CD8-positive, alpha-beta T cell (primary cell): ENCODE measurements at regions of chr20 and their contacts with region 1.

Region 1: DNA sequence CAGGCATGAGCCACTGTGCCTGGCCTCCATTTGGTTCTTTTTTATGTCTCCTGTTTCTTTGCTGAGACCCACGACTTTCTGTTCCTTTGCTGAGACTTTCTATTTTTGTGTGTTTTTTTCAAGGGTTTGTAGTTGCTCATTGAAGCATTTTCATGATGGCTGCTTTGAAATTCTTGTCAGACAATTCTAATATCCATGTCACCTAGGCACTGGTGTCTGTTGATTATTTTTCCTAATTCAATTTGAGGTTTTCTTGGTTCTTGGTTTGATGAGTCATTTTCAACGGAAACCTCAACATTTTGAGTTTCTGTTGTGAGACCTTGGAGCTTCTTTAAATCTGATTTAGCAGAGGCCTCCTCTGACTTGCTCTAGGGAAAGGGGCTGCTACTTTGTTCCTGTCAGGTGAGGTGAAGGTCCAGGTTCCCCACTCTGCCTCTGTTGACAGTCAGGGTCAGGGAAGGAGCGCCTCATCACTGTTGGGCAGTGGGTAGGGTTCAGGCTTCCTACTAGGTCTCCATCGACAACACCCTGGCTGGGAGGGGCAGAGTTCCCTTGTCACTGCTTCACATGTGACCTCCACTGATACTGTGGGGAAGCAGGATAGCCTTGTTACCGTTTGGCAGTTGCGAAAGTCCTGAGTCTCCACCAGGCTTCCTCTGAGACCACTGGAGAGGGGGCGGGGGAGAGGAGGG is 67.2 kb upstream of the RNF24 start:
- DNase-seq: peak; percentile 16 to 77 (median 47)
- ATAC-seq: peak; percentile 70
- H3K4me3 ChIP-seq: peak overlapping the region in 1 of 2 experiments; percentile 26
- H3K4me3 Mint-ChIP-seq: peak overlapping the region; percentile 32
- H3K27ac ChIP-seq: peak overlapping the region in 1 of 2 experiments; percentile 75
- H3K27ac Mint-ChIP-seq: peak overlapping the region; percentile 82
- H3K4me1 ChIP-seq: peaks cover 12% of the 10 kb centered on the region
- H3K4me1 Mint-ChIP-seq: peaks cover 39% of the 10 kb centered on the region
- H3K27me3 ChIP-seq: no peaks in the 10 kb centered on the region
- H3K27me3 Mint-ChIP-seq: no peaks in the 10 kb centered on the region
- CTCF ChIP-seq: no peak

Region 2: GRCh38 chr20:3563548-3564177 is 518.9 kb before region 1 on chr20:
- CTCF ChIA-PET with region 1: no interaction called
- POLR2A ChIA-PET with region 1: no interaction called
- intact Hi-C with region 1: loop called in 1 of 2 experiments (anchors 2 kb)
- DNase-seq: peak in 2 of 9 experiments; percentile 39 to 54
- ATAC-seq: no peak
- H3K4me3 ChIP-seq: no peak overlapping the region
- H3K4me3 Mint-ChIP-seq: no peak overlapping the region
- H3K27ac ChIP-seq: no peak overlapping the region
- H3K27ac Mint-ChIP-seq: no peak overlapping the region
- H3K4me1 ChIP-seq: no peaks in the 10 kb centered on the region
- H3K4me1 Mint-ChIP-seq: no peaks in the 10 kb centered on the region
- H3K27me3 ChIP-seq: no peaks in the 10 kb centered on the region
- H3K27me3 Mint-ChIP-seq: no peaks in the 10 kb centered on the region
- CTCF ChIP-seq: peak; percentile 56

Region 3: GRCh38 chr20:3716195-3716834 is 366.2 kb before region 1 on chr20:
- CTCF ChIA-PET with region 1: interaction called, 3 read pairs
- POLR2A ChIA-PET with region 1: no interaction called
- intact Hi-C with region 1: loop called in 1 of 2 experiments (anchors 2 kb)
- DNase-seq: peak in 4 of 9 experiments; percentile 15 to 50 (median 27)
- ATAC-seq: peak; percentile 36
- H3K4me3 ChIP-seq: no peak overlapping the region
- H3K4me3 Mint-ChIP-seq: no peak overlapping the region
- H3K27ac ChIP-seq: no peak overlapping the region
- H3K27ac Mint-ChIP-seq: no peak overlapping the region
- H3K4me1 ChIP-seq: no peaks in the 10 kb centered on the region
- H3K4me1 Mint-ChIP-seq: no peaks in the 10 kb centered on the region
- H3K27me3 ChIP-seq: peaks cover 0 to 5% of the 10 kb centered on the region in 2 experiments
- H3K27me3 Mint-ChIP-seq: peaks cover 13% of the 10 kb centered on the region
- CTCF ChIP-seq: peak; percentile 22

Region 4: DNA sequence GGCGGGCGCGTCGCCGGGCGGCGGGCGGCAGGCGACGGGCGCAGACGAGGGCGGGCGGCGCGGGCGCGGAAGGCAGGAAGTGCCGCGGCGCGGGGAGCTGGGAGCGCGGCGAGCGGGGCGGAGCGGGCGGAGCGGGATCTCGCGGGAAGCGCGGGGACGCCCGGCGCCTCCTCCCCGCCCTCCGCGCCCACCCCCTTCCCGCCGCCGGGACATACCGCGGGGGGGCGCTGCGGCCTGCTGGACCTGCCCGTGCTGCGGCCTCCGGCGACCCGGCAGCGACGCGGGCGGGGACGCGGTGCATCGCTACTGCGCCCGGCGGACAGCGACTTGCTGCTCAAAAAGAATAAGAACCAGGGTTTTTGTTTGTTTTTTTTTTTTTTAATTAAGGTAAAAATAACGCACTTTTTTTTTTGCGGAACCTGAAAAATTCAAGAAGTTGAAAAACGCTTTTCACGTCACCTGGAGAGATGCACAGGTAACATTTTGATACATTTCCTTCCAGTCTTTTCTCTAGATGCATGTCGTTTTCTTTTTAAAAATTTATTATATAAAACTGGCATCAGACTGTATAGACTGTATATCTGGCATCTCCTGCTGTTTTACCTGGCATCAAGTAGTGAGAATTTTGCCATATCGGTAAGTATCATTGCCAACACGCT is 295.8 kb before region 1 on chr20 and contains the start of gene CENPB:
- CTCF ChIA-PET with region 1: no interaction called
- POLR2A ChIA-PET with region 1: no interaction called
- intact Hi-C with region 1: loop called in 1 of 2 experiments (anchors 10 kb)
- DNase-seq: peak; percentile 83 to 95 (median 90)
- ATAC-seq: peak; percentile 87
- H3K4me3 ChIP-seq: peak within 1 kb of the TSS; percentile 46 to 55
- H3K4me3 Mint-ChIP-seq: peak within 1 kb of the TSS; percentile 84
- H3K27ac ChIP-seq: peak within 1 kb of the TSS; percentile 37 to 75
- H3K27ac Mint-ChIP-seq: peak within 1 kb of the TSS; percentile 91
- H3K4me1 ChIP-seq: peaks cover 24% of the 10 kb centered on the region
- H3K4me1 Mint-ChIP-seq: peaks cover 30% of the 10 kb centered on the region
- H3K27me3 ChIP-seq: no peaks in the 10 kb centered on the region
- H3K27me3 Mint-ChIP-seq: no peaks in the 10 kb centered on the region
- CTCF ChIP-seq: peak; percentile 86
- total RNA-seq, gene CENPB: 23.2 to 24.1 TPM

Region 5: GRCh38 chr20:4027590-4028265 is 54.8 kb before region 1 on chr20:
- CTCF ChIA-PET with region 1: no interaction called
- POLR2A ChIA-PET with region 1: no interaction called
- intact Hi-C with region 1: no loop called
- DNase-seq: peak in 1 of 9 experiments; percentile 21
- ATAC-seq: no peak
- H3K4me3 ChIP-seq: no peak overlapping the region
- H3K4me3 Mint-ChIP-seq: no peak overlapping the region
- H3K27ac ChIP-seq: no peak overlapping the region
- H3K27ac Mint-ChIP-seq: no peak overlapping the region
- H3K4me1 ChIP-seq: no peaks in the 10 kb centered on the region
- H3K4me1 Mint-ChIP-seq: no peaks in the 10 kb centered on the region
- H3K27me3 ChIP-seq: no peaks in the 10 kb centered on the region
- H3K27me3 Mint-ChIP-seq: peaks cover 5% of the 10 kb centered on the region
- CTCF ChIP-seq: no peak

Region 6: GRCh38 chr20:4038047-4038459 is 44.5 kb before region 1 on chr20:
- CTCF ChIA-PET with region 1: interaction called, 12 read pairs
- POLR2A ChIA-PET with region 1: interaction called, 4 read pairs
- intact Hi-C with region 1: loop called (anchors 2 kb)
- DNase-seq: peak; percentile 62 to 94 (median 80)
- ATAC-seq: peak; percentile 100
- H3K4me3 ChIP-seq: peak overlapping the region; percentile 11 to 23
- H3K4me3 Mint-ChIP-seq: peak overlapping the region; percentile 80
- H3K27ac ChIP-seq: peak overlapping the region; percentile 45 to 66
- H3K27ac Mint-ChIP-seq: peak overlapping the region; percentile 97
- H3K4me1 ChIP-seq: peaks cover 20% of the 10 kb centered on the region
- H3K4me1 Mint-ChIP-seq: peaks cover 16% of the 10 kb centered on the region
- H3K27me3 ChIP-seq: no peaks in the 10 kb centered on the region
- H3K27me3 Mint-ChIP-seq: no peaks in the 10 kb centered on the region
- CTCF ChIP-seq: no peak

Region 7: GRCh38 chr20:4102381-4102780 is 19.8 kb after region 1 on chr20:
- CTCF ChIA-PET with region 1: interaction called, 10 read pairs
- POLR2A ChIA-PET with region 1: no interaction called
- intact Hi-C with region 1: no loop called
- DNase-seq: no peak
- ATAC-seq: no peak
- H3K4me3 ChIP-seq: no peak overlapping the region
- H3K4me3 Mint-ChIP-seq: no peak overlapping the region
- H3K27ac ChIP-seq: no peak overlapping the region
- H3K27ac Mint-ChIP-seq: no peak overlapping the region
- H3K4me1 ChIP-seq: no peaks in the 10 kb centered on the region
- H3K4me1 Mint-ChIP-seq: no peaks in the 10 kb centered on the region
- H3K27me3 ChIP-seq: no peaks in the 10 kb centered on the region
- H3K27me3 Mint-ChIP-seq: peaks cover under 1% of the 10 kb centered on the region
- CTCF ChIP-seq: no peak